Calu3 (cell line): ENCODE measurements at regions of chr4 and their contacts with region 1.

Region 1: GRCh38 chr4:94304365-94304971 is 38.2 kb downstream of the HPGDS start:
- DNase-seq: peak; percentile 21
- H3K4me3 Mint-ChIP-seq: no peak overlapping the region
- H3K27ac Mint-ChIP-seq: no peak overlapping the region
- H3K4me1 Mint-ChIP-seq: peaks cover 14% of the 10 kb centered on the region
- H3K27me3 Mint-ChIP-seq: no peaks in the 10 kb centered on the region
- CTCF ChIP-seq: peak; percentile 33

Region 2: GRCh38 chr4:94390804-94391410 is 86.4 kb after region 1 on chr4:
- CTCF ChIA-PET with region 1: interaction called, 3 read pairs
- intact Hi-C with region 1: loop called (anchors 1 kb)
- DNase-seq: peak; percentile 22
- H3K4me3 Mint-ChIP-seq: no peak overlapping the region
- H3K27ac Mint-ChIP-seq: no peak overlapping the region
- H3K4me1 Mint-ChIP-seq: no peaks in the 10 kb centered on the region
- H3K27me3 Mint-ChIP-seq: peaks cover 24% of the 10 kb centered on the region
- CTCF ChIP-seq: peak; percentile 29

Region 3: GRCh38 chr4:94583914-94584641 is 279.6 kb after region 1 on chr4:
- CTCF ChIA-PET with region 1: no interaction called
- intact Hi-C with region 1: loop called (anchors 10 kb)
- DNase-seq: no peak
- H3K4me3 Mint-ChIP-seq: no peak overlapping the region
- H3K27ac Mint-ChIP-seq: no peak overlapping the region
- H3K4me1 Mint-ChIP-seq: peaks cover 9% of the 10 kb centered on the region
- H3K27me3 Mint-ChIP-seq: no peaks in the 10 kb centered on the region
- CTCF ChIP-seq: no peak

Region 4: GRCh38 chr4:94722748-94723147 is 418.3 kb after region 1 on chr4:
- CTCF ChIA-PET with region 1: no interaction called
- intact Hi-C with region 1: loop called (anchors 10 kb)
- DNase-seq: no peak
- H3K4me3 Mint-ChIP-seq: no peak overlapping the region
- H3K27ac Mint-ChIP-seq: no peak overlapping the region
- H3K4me1 Mint-ChIP-seq: peaks cover 25% of the 10 kb centered on the region
- H3K27me3 Mint-ChIP-seq: no peaks in the 10 kb centered on the region
- CTCF ChIP-seq: no peak